PC-9 (cell line): ENCODE measurements at regions of chr3 and their contacts with region 1.

Region 1: GRCh38 chr3:189277711-189278110 is 105.9 kb downstream of the TPRG1 start:
- DNase-seq: no peak
- H3K4me3 ChIP-seq: no peak overlapping the region
- H3K27ac ChIP-seq: no peak overlapping the region
- H3K4me1 ChIP-seq: 0 out of 2 replicates have a peak, but pooled peaks cover 6% of the 10 kb centered on the region
- H3K27me3 ChIP-seq: no peaks in the 10 kb centered on the region
- CTCF ChIP-seq: no peak

Region 2: DNA sequence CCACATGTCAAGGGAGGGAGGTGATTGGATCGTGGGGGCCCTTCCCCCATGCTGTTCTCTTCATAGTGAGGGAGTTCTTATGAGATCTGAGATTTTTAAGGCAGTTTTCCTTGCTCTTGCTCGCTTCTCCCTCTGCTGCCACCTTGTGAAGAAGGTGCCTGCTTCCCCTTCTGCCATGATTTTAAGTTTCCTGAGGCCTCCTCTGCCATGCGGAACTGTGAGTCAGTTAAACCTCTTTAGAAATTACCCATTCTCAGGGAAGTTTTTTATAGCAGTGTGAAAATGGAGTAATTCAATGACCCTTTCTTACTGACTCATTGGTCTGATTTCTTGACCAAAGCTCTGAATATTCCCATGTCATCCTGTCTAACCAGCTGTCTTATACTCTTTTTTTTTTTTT is 590.3 kb before region 1 on chr3:
- CTCF ChIA-PET with region 1: no interaction called
- POLR2A ChIA-PET with region 1: no interaction called
- intact Hi-C with region 1: no loop called
- DNase-seq: peak in 1 of 2 experiments; percentile 44
- H3K4me3 ChIP-seq: no peak overlapping the region
- H3K27ac ChIP-seq: no peak overlapping the region
- H3K4me1 ChIP-seq: peaks cover 11% of the 10 kb centered on the region
- H3K27me3 ChIP-seq: no peaks in the 10 kb centered on the region
- CTCF ChIP-seq: peak; percentile 45; the same call in 1 of the 2 replicates

Region 3: DNA sequence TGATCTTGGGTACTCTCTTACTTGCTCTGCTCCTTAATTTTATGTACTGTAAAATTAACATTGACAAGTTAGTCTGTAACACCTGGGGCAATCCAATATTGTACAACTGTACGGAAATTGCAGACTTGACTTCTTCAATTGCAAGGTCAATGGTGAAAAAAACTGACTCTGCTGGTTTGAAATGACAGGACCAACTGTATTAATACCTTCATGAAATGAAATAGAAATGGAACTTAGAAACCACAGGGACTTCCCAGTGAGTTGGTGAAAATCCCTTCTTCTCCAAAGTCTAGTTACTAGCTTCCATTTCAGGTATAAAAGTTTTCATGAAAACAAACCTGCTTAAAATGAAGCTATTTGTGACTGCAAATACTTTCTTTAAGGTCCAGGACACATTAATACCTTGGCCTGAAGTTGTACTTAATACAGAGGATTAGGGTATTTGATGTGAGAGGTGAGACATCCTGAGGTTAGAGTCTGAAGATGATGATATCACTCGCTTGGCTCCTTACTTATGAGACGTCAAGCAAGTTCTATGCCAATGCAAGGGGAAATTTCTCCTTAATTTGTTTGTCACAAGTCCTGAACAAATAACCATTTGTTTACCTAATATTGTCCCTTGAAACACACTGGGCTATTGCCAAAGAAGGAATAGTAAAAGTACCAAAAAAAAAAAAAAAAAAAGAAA is 127.2 kb after region 1 on chr3:
- CTCF ChIA-PET with region 1: no interaction called
- POLR2A ChIA-PET with region 1: interaction called, 12 read pairs
- intact Hi-C with region 1: no loop called
- DNase-seq: no peak
- H3K4me3 ChIP-seq: no peak overlapping the region
- H3K27ac ChIP-seq: no peak overlapping the region
- H3K4me1 ChIP-seq: no peaks in the 10 kb centered on the region
- H3K27me3 ChIP-seq: no peaks in the 10 kb centered on the region
- CTCF ChIP-seq: no peak